A549 (cell line): ENCODE measurements at regions of chr17 and their contacts with region 1.

Region 1: GRCh38 chr17:29838961-29839360 is 91.1 kb downstream of the SSH2 start:
- DNase-seq: peak in 1 of 2 experiments; percentile 16
- ATAC-seq: peak in 1 of 2 experiments; percentile 47; a peak in 3 of 6 replicates
- H3K4me3 ChIP-seq: no peak overlapping the region
- H3K27ac ChIP-seq: no peak overlapping the region
- H3K4me1 ChIP-seq: peaks cover 17% of the 10 kb centered on the region; the same call in 2 of the 3 replicates
- CTCF ChIP-seq: no peak
- EP300 ChIP-seq: no peak
- POLR2A ChIP-seq: no peak
- RAD21 ChIP-seq: no peak

Region 2: GRCh38 chr17:29747660-29748059 is 91.3 kb before region 1 on chr17:
- CTCF ChIA-PET with region 1: no interaction called
- POLR2A ChIA-PET with region 1: no interaction called
- DNase-seq: no peak
- ATAC-seq: no peak
- H3K4me3 ChIP-seq: no peak overlapping the region
- H3K27ac ChIP-seq: no peak overlapping the region
- H3K4me1 ChIP-seq: peaks cover 38% of the 10 kb centered on the region
- CTCF ChIP-seq: no peak
- EP300 ChIP-seq: no peak
- POLR2A ChIP-seq: no peak
- RAD21 ChIP-seq: no peak

Region 3: GRCh38 chr17:29826114-29826692 is 12.8 kb before region 1 on chr17:
- CTCF ChIA-PET with region 1: interaction called, 13 read pairs
- POLR2A ChIA-PET with region 1: no interaction called
- DNase-seq: no peak
- ATAC-seq: no peak
- H3K4me3 ChIP-seq: no peak overlapping the region
- H3K27ac ChIP-seq: no peak overlapping the region
- H3K4me1 ChIP-seq: no peaks in the 10 kb centered on the region
- CTCF ChIP-seq: no peak
- EP300 ChIP-seq: no peak
- POLR2A ChIP-seq: no peak
- RAD21 ChIP-seq: no peak

Region 4: DNA sequence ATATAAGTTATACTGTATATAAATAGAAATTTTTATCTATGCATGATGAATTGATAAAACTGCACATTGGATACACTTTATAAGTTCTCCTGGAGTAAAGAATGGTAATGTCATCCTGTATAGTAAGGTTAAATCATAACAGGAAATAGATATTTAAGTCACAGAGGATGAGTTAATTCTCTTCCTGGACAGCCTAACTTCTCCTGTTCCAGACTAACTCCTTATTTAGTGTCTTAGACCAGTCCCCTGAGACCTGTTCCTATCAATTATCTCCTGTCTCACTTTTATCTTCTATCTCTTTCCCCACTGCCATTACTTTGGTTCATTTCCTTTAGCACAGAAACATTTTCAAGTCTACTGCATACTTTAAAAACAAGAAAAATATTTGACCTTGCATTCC is 44.5 kb after region 1 on chr17:
- CTCF ChIA-PET with region 1: no interaction called
- POLR2A ChIA-PET with region 1: no interaction called
- DNase-seq: no peak
- ATAC-seq: no peak
- H3K4me3 ChIP-seq: no peak overlapping the region
- H3K27ac ChIP-seq: no peak overlapping the region
- H3K4me1 ChIP-seq: no peaks in the 10 kb centered on the region
- CTCF ChIP-seq: no peak
- EP300 ChIP-seq: no peak
- POLR2A ChIP-seq: no peak
- RAD21 ChIP-seq: no peak

Region 5: DNA sequence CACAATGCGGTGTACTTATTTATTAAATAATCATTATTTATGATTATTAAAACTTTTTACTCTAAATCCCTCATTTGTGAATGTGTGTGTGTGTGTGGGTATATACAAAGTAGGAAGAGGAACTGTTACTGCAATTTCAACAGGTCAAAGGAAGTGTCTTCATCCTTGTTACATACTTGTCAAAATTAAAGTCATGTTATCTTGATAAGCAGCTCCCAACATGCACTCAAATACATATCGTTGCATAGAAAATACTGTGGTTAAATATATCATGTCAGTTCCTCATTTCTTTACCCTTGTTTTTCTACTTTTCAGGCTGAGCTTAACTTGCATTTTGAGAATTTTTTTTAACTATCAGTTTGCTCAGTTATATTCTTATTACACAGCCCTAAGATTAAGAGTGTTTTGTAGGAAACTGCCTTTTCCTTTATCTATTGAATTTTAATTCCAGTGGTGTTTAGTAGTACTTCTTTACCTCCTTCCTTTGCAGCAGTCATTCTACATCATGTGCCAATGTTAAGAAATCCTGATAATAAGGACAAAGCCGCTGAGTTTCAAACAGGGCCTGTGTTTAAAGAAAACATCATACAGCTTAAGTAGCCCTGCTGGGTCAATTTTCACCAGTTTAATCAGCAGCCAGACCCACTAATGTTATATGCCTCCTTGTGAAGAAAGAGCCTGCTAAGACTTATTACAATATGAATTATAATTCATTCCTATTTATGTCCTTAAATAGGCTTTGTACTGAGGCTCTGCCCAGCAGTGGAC is 109.7 kb after region 1 on chr17:
- CTCF ChIA-PET with region 1: no interaction called
- POLR2A ChIA-PET with region 1: no interaction called
- DNase-seq: no peak
- ATAC-seq: no peak
- H3K4me3 ChIP-seq: no peak overlapping the region
- H3K27ac ChIP-seq: no peak overlapping the region
- H3K4me1 ChIP-seq: no peaks in the 10 kb centered on the region
- CTCF ChIP-seq: no peak
- EP300 ChIP-seq: no peak
- POLR2A ChIP-seq: no peak
- RAD21 ChIP-seq: no peak